ENCODE measurements at regions of chr3 and their contacts with region 1.

Region 1: GRCh38 chr3:50292159-50293078 is at the start of gene IFRD2:
- DNase-seq: peak; percentile 98
- ATAC-seq: peak; percentile 99
- H3K4me3 Mint-ChIP-seq: peak within 1 kb of the TSS; percentile 88
- H3K27ac Mint-ChIP-seq: peak within 1 kb of the TSS; percentile 99
- H3K4me1 Mint-ChIP-seq: peaks cover 16% of the 10 kb centered on the region
- H3K27me3 Mint-ChIP-seq: no peaks in the 10 kb centered on the region
- total RNA-seq, gene IFRD2: 100 to 125 TPM

Region 2: GRCh38 chr3:49856181-49857005 is 436.0 kb before region 1 on chr3 and contains the start of gene TRAIP:
- CTCF ChIA-PET with region 1: no interaction called
- POLR2A ChIA-PET with region 1: no interaction called
- intact Hi-C with region 1: loop called in 1 of 2 experiments (anchors 2 kb)
- DNase-seq: peak; percentile 97
- ATAC-seq: peak; percentile 99
- H3K4me3 Mint-ChIP-seq: peak within 1 kb of the TSS; percentile 97
- H3K27ac Mint-ChIP-seq: peak within 1 kb of the TSS; percentile 81
- H3K4me1 Mint-ChIP-seq: peaks cover 10% of the 10 kb centered on the region
- H3K27me3 Mint-ChIP-seq: no peaks in the 10 kb centered on the region
- total RNA-seq, gene TRAIP: 25.1 to 28.1 TPM

Region 3: DNA sequence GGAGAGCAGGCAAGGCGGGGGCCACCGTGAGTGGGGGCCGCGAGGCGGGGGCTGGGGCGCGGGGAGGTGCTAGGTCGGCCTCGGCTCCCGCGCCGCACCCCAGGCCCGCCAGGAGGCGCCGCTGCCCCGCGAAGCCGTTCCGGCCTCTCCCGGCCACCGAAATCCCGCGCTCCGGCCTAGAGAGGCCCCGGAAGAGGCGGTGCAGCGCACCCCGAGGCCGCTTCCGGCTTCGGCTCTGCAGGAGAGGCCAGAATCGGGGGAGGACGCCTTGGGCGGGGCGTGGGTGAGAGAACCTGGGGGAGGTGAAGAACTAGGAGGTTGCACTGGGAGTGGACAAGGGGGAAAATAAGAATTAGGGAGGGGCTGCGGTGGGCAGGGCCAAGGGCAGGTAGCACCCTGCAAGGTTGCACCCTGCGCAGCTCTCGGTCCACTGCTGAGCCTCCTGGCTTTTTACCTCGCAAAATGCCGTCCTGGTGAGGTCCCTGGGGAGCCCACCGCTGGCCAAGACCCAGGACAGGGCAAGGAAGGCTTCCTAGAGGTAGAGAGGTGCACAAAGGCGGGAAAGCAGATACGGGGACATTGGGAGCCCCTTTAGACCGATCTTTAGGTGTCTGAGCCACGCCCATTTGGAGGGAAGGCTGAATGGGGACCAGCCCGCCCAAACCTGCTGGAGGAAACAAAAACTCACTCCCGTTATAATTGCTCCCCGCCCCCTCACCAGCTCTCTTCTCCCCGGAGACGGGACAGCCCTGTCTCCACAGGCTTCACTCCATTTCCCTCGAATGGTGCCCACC is 64.8 kb before region 1 on chr3:
- CTCF ChIA-PET with region 1: interaction called, 3 read pairs
- POLR2A ChIA-PET with region 1: no interaction called
- intact Hi-C with region 1: loop called in 1 of 2 experiments (anchors 1 kb)
- DNase-seq: peak; percentile 95
- ATAC-seq: peak; percentile 83
- H3K4me3 Mint-ChIP-seq: peak overlapping the region; percentile 79
- H3K27ac Mint-ChIP-seq: peak overlapping the region; percentile 88
- H3K4me1 Mint-ChIP-seq: peaks cover 22% of the 10 kb centered on the region
- H3K27me3 Mint-ChIP-seq: no peaks in the 10 kb centered on the region

Region 4: GRCh38 chr3:50260027-50260941 is 32.1 kb before region 1 on chr3:
- CTCF ChIA-PET with region 1: interaction called, 4 read pairs
- POLR2A ChIA-PET with region 1: no interaction called
- intact Hi-C with region 1: loop called in 1 of 2 experiments (anchors 1 kb)
- DNase-seq: peak; percentile 94
- ATAC-seq: peak; percentile 91
- H3K4me3 Mint-ChIP-seq: peak overlapping the region; percentile 61
- H3K27ac Mint-ChIP-seq: peak overlapping the region; percentile 65
- H3K4me1 Mint-ChIP-seq: peaks cover 4% of the 10 kb centered on the region
- H3K27me3 Mint-ChIP-seq: no peaks in the 10 kb centered on the region

Region 5: GRCh38 chr3:50327943-50328691 is 35.7 kb after region 1 on chr3 and contains the start of gene TUSC2:
- CTCF ChIA-PET with region 1: interaction called, 6 read pairs
- POLR2A ChIA-PET with region 1: no interaction called
- intact Hi-C with region 1: loop called in 1 of 2 experiments (anchors 1 kb)
- DNase-seq: peak; percentile 98
- ATAC-seq: peak; percentile 95
- H3K4me3 Mint-ChIP-seq: peak within 1 kb of the TSS; percentile 83
- H3K27ac Mint-ChIP-seq: peak within 1 kb of the TSS; percentile 76
- H3K4me1 Mint-ChIP-seq: peaks cover 20% of the 10 kb centered on the region
- H3K27me3 Mint-ChIP-seq: no peaks in the 10 kb centered on the region
- total RNA-seq, gene TUSC2: 15.0 to 17.1 TPM

Region 6: DNA sequence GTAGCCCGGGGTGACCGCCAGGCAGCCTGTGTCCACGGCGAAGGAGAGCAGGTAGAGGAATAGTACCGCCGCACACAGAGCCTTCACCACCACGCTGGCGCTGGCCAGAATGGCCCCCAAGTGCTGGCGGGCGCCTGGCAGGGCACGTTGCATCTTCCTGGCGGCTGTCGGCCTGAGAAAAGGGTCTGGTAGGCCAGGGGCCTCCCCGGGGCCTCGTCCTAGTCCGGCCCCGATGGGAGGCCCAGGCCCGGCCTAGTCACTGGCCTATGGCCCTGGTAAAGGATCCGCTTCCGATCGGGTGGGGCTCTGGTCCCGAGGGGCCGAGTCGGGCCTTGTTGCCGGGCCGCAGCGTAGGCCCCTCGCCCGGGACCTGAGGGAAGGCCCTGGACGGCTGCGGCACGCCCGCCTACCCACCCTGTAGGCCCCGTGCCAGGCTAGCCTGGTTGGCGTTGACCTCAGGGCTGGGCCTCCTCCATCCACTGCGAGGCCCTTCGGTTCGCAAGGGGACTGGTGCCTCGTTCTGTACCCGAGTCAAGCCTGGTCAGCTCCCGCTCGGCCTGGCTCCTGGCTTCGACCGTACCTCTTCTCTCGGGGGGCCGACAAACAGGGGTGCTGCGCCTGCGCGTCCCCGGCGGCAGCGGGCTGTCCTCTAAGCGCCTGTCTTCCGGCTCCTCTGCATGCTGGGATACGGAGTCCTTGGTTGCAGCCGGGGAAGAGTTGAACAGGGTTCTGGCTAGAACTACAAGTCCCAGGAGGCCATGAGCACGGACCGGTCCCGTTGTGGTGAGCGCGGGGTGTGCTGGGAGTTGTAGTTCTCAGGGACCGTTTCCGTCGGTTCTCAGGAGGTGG is 66.7 kb after region 1 on chr3 and contains the start of gene TMEM115:
- CTCF ChIA-PET with region 1: interaction called, 3 read pairs
- POLR2A ChIA-PET with region 1: no interaction called
- intact Hi-C with region 1: loop called (anchors 1 kb)
- DNase-seq: peak; percentile 97
- ATAC-seq: peak; percentile 100
- H3K4me3 Mint-ChIP-seq: peak within 1 kb of the TSS; percentile 91
- H3K27ac Mint-ChIP-seq: peak within 1 kb of the TSS; percentile 94
- H3K4me1 Mint-ChIP-seq: peaks cover 37% of the 10 kb centered on the region
- H3K27me3 Mint-ChIP-seq: no peaks in the 10 kb centered on the region
- total RNA-seq, gene TMEM115: 13.1 to 16.1 TPM

Region 7: DNA sequence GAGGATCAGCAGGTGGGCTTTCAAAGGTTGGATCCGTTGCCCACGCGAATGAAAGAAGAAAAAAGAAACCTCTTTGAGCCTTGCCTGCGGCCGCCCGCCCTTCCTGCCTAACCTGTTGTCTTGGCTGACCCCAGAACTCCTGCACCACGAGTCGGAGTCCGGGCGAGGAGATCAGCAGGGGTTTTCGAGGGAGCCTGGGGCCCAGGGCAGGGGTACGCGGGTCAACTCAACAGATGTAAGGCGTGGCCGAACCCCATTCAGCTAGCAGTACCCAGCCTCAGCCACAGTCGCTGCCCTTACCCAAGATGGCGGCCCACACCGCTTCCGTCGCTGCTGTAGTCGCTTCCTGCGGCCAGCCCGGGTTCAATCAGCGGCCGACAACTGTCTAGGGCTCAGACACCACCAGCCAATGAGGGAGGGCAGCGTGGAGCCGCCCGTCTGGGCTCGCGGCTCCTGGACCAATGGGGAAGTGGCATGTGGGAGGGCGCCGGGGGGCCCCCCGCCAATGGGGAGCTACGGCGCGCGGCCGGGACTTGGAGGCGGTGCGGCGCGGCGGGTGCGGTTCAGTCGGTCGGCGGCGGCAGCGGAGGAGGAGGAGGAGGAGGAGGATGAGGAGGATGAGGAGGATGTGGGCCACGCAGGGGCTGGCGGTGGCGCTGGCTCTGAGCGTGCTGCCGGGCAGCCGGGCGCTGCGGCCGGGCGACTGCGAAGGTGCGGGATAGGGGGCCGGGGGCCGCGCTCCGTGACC is 1092.5 kb after region 1 on chr3 and contains the start of gene MANF:
- CTCF ChIA-PET with region 1: no interaction called
- POLR2A ChIA-PET with region 1: no interaction called
- intact Hi-C with region 1: loop called in 1 of 2 experiments (anchors 1 kb)
- DNase-seq: peak; percentile 99
- ATAC-seq: peak; percentile 97
- H3K4me3 Mint-ChIP-seq: peak within 1 kb of the TSS; percentile 93
- H3K27ac Mint-ChIP-seq: peak within 1 kb of the TSS; percentile 99
- H3K4me1 Mint-ChIP-seq: peaks cover 46% of the 10 kb centered on the region
- H3K27me3 Mint-ChIP-seq: no peaks in the 10 kb centered on the region
- total RNA-seq, gene MANF: 124 to 129 TPM